ENCODE measurements at regions of chr22 and their contacts with region 1.

Region 1: DNA sequence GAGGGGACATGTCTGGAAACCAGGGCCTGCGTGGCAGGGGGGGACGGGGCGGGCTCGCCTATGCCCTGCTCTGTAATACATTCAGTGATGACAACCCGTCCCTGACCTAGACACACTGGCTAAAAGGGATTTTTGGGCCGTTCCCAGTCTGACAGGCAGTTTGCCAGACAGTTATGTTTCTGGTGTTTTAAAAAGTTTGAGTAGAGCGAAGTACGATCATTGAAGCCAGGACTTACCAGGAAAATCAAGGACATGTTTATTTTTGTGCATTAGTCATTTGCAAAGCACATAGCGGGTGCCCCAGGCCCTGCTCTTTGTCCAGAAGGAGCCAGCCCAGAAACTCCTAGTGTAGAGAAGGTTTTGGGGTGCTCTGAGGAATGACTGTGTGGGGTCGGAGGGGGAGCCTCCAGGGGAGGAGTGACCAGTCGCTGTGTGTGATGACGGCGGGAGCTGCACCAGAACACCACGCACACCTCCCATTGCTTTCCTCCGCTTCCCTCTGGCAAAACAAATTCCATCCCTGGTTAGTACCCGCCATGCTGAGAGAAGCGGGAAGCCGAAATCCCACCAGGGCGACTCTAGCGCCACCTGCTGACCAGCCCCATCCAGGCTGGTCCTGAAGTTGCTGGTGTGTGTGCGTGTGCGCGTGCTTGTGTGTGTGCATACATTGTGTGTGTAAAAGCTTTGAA is 50.8 kb downstream of the FBLN1 start:
- DNase-seq: peak; percentile 90
- H3K4me3 Mint-ChIP-seq: peak overlapping the region; percentile 2
- H3K27ac Mint-ChIP-seq: peak overlapping the region; percentile 99
- H3K4me1 Mint-ChIP-seq: peaks cover 37% of the 10 kb centered on the region
- H3K27me3 Mint-ChIP-seq: no peaks in the 10 kb centered on the region
- CTCF ChIP-seq: peak; percentile 96

Region 2: DNA sequence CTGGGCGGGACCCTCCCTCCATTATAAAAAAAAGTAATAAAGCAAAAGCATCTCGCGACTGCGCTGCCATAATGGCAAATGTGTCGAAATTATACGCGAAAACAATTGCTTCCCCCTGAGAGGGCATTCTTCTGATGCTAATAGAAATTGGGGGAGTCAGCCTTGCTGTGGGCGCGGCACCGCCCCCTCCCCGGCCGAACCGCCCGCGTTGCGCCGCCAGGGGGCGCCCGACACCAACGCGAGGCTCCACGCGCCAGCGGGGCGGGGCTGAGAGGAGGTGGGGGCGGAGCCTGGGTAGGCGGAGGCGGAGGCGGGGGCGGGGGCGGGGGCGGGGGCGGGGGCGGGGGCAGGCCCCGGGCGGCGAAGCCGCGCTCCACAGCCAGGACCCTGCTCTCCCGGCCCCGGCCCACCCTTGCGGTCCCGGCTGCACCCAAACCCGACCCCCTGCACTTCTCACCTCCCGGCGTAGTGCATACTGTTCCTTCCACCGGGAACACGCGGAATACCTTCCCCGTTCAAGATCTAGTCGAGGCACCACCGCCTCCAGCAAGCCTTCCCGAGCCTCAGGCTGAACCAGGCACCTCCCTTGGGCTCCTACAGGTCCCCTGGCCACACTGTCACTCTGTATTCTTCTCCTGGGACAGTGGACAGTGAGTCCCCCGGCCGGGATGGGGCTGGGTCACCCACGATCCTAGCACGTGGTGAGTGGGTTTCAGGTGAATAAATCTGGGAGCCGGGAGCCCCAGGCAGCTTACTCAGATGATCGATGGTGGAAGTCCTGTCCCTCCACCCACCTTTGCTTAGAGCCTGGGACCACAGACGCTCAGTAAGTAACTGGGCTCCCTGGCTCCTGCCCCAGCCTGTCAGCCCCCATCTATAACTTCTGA is 284.3 kb before region 1 on chr22:
- CTCF ChIA-PET with region 1: interaction called, 15 read pairs
- POLR2A ChIA-PET with region 1: no interaction called
- intact Hi-C with region 1: loop called (anchors 1 kb)
- DNase-seq: peak; percentile 67
- H3K4me3 Mint-ChIP-seq: peak overlapping the region; percentile 74
- H3K27ac Mint-ChIP-seq: no peak overlapping the region
- H3K4me1 Mint-ChIP-seq: no peaks in the 10 kb centered on the region
- H3K27me3 Mint-ChIP-seq: no peaks in the 10 kb centered on the region
- CTCF ChIP-seq: peak; percentile 98

Region 3: GRCh38 chr22:45413013-45413367 is 140.5 kb before region 1 on chr22:
- CTCF ChIA-PET with region 1: no interaction called
- POLR2A ChIA-PET with region 1: no interaction called
- intact Hi-C with region 1: no loop called
- DNase-seq: no peak
- H3K4me3 Mint-ChIP-seq: no peak overlapping the region
- H3K27ac Mint-ChIP-seq: no peak overlapping the region
- H3K4me1 Mint-ChIP-seq: no peaks in the 10 kb centered on the region
- H3K27me3 Mint-ChIP-seq: no peaks in the 10 kb centered on the region
- CTCF ChIP-seq: no peak

Region 4: DNA sequence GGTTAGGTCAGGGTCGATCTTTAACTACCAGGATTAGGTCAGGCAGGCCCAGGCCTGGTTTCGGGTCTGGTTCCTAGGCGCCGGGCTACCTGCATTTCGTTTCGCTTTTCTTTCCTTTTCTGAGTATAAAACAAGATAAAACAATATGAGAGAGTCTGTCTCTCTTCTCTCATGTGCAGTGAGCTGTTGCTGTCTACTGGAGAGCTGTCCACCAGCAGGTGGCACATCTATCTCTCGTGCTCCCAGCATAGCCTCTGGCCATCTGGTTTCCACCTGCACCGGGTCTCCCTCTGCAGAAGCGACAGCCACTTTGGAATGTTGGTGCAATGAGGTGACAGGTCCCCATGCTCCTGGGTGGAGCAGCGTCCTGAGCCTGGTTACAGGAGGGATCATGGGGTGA is 112.4 kb before region 1 on chr22:
- CTCF ChIA-PET with region 1: interaction called, 142 read pairs
- POLR2A ChIA-PET with region 1: interaction called, 20 read pairs
- intact Hi-C with region 1: loop called (anchors 1 kb)
- DNase-seq: peak; percentile 68
- H3K4me3 Mint-ChIP-seq: no peak overlapping the region
- H3K27ac Mint-ChIP-seq: no peak overlapping the region
- H3K4me1 Mint-ChIP-seq: peaks cover 19% of the 10 kb centered on the region
- H3K27me3 Mint-ChIP-seq: no peaks in the 10 kb centered on the region
- CTCF ChIP-seq: peak; percentile 81

Region 5: GRCh38 chr22:45469281-45470073 is 84.0 kb before region 1 on chr22:
- CTCF ChIA-PET with region 1: interaction called, 10 read pairs
- POLR2A ChIA-PET with region 1: interaction called, 44 read pairs
- intact Hi-C with region 1: no loop called
- DNase-seq: peak; percentile 91
- H3K4me3 Mint-ChIP-seq: peak overlapping the region; percentile 58
- H3K27ac Mint-ChIP-seq: peak overlapping the region; percentile 90
- H3K4me1 Mint-ChIP-seq: peaks cover 25% of the 10 kb centered on the region
- H3K27me3 Mint-ChIP-seq: no peaks in the 10 kb centered on the region
- CTCF ChIP-seq: no peak

Region 6: GRCh38 chr22:45502215-45503049 is 51.1 kb before region 1 on chr22 and contains the start of gene FBLN1:
- CTCF ChIA-PET with region 1: interaction called, 9 read pairs
- POLR2A ChIA-PET with region 1: interaction called, 20 read pairs
- intact Hi-C with region 1: loop called (anchors 2 kb)
- DNase-seq: peak; percentile 52
- H3K4me3 Mint-ChIP-seq: peak within 1 kb of the TSS; percentile 85
- H3K27ac Mint-ChIP-seq: peak within 1 kb of the TSS; percentile 86
- H3K4me1 Mint-ChIP-seq: peaks cover 13% of the 10 kb centered on the region
- H3K27me3 Mint-ChIP-seq: no peaks in the 10 kb centered on the region
- CTCF ChIP-seq: peak; percentile 36
- total RNA-seq, gene FBLN1: 69.0 and 110 TPM in 2 replicates

Region 7: GRCh38 chr22:45537734-45538181 is 15.7 kb before region 1 on chr22:
- CTCF ChIA-PET with region 1: interaction called, 18 read pairs
- POLR2A ChIA-PET with region 1: interaction called, 47 read pairs
- intact Hi-C with region 1: no loop called
- DNase-seq: peak; percentile 97
- H3K4me3 Mint-ChIP-seq: peak overlapping the region; percentile 20
- H3K27ac Mint-ChIP-seq: peak overlapping the region; percentile 87
- H3K4me1 Mint-ChIP-seq: peaks cover 13% of the 10 kb centered on the region
- H3K27me3 Mint-ChIP-seq: no peaks in the 10 kb centered on the region
- CTCF ChIP-seq: no peak

Region 8: GRCh38 chr22:45584121-45584570 is 30.7 kb after region 1 on chr22:
- CTCF ChIA-PET with region 1: no interaction called
- POLR2A ChIA-PET with region 1: no interaction called
- intact Hi-C with region 1: no loop called
- DNase-seq: peak; percentile 43
- H3K4me3 Mint-ChIP-seq: no peak overlapping the region
- H3K27ac Mint-ChIP-seq: no peak overlapping the region
- H3K4me1 Mint-ChIP-seq: peaks cover 6% of the 10 kb centered on the region
- H3K27me3 Mint-ChIP-seq: no peaks in the 10 kb centered on the region
- CTCF ChIP-seq: no peak

Region 9: DNA sequence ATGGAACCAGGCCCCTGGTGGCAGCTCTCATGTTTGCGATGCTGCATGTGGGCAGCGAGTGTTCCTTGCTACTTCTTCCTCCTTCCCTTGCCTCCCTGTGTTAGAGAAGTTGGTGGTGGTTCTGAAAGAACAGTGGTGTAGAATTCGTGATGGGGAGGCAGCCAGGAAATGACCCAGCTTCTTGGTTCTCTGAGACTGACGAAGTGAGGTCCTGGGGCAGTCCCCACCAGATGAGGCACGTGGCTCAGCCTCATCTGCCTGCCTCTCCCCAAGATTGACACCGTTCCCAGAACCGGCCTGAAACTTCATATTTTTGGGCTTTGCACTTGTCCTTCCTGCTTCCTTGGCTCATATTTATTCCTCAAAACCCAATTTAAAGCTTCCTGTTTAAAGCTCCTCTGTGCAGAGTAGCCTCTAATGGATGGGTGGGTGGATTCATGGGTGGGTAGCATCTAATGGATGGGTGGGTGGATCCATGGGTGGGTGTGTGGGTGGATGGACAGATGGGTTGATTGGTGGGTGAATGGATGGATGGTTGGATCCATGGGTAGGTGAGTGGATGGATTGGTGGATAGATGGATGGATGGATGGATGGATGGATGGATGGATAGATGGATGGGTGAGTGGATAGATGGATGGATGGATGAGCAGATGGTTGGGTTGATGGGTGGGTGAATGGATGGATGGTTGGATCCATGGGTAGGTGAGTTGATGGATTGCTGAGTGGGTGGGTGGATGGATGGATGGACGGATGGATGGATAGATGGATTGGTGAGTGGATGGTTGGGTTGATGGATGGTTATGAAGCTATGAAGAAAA is 40.8 kb after region 1 on chr22:
- CTCF ChIA-PET with region 1: no interaction called
- POLR2A ChIA-PET with region 1: no interaction called
- intact Hi-C with region 1: no loop called
- DNase-seq: no peak
- H3K4me3 Mint-ChIP-seq: no peak overlapping the region
- H3K27ac Mint-ChIP-seq: no peak overlapping the region
- H3K4me1 Mint-ChIP-seq: no peaks in the 10 kb centered on the region
- H3K27me3 Mint-ChIP-seq: no peaks in the 10 kb centered on the region
- CTCF ChIP-seq: no peak

Measured in MCF 10A (cell line).